ENCODE measurements at regions of chr2 and their contacts with region 1.

Region 1: GRCh38 chr2:62787386-62787785 is 81.9 kb downstream of the EHBP1 start:
- DNase-seq: peak; percentile 20
- H3K4me3 ChIP-seq: no peak overlapping the region
- H3K27ac ChIP-seq: no peak overlapping the region
- H3K4me1 ChIP-seq: peaks cover 8% of the 10 kb centered on the region
- H3K27me3 ChIP-seq: no peaks in the 10 kb centered on the region
- CTCF ChIP-seq: peak; percentile 21 to 51

Region 2: GRCh38 chr2:62939735-62940491 is 152.5 kb after region 1 on chr2:
- CTCF ChIA-PET with region 1: no interaction called
- dilution Hi-C with region 1: no loop called
- in situ Hi-C with region 1: no loop called
- intact Hi-C with region 1: loop called (anchors 10 kb)
- DNase-seq: peak; percentile 92
- H3K4me3 ChIP-seq: no peak overlapping the region
- H3K27ac ChIP-seq: no peak overlapping the region
- H3K4me1 ChIP-seq: peaks cover 9% of the 10 kb centered on the region
- H3K27me3 ChIP-seq: no peaks in the 10 kb centered on the region
- CTCF ChIP-seq: no peak

Region 3: DNA sequence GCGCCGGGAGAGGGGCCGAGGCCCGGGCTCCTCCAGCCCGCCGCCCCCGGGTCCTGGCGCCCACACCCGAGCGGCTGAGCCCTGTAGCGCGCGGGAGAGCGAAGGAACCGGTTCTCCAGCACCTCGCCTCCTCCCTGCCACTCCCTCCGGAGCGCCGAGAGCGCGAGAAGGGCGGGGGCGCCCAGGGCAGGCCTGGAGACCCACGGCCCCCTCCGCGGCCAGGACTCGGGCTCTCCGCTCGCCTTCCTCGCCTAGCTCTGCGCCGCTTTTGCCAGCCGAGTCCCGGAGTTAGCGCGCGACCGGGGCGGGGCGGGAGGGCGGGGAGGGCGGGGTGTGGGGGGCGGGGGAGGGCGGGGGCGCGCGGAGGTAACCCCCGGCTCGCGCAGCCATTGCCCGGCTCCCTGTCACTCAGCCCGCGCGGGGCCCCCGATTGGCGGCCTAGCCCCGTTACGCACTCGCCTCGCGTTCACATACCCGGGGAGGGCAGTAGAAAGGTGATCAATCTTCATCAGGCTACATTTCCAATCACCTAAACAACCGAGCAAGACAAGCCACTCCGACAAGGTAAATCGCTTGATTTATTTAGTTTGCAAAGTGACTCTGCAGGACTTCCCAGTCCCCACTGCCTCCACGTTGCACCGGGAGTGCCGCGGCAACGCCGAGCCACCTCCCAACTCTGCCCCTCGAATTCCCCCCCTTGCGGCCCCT is 263.1 kb after region 1 on chr2 and contains the start of gene OTX1:
- CTCF ChIA-PET with region 1: interaction called, 3 read pairs
- dilution Hi-C with region 1: no loop called
- in situ Hi-C with region 1: no loop called
- intact Hi-C with region 1: loop called (anchors 10 kb)
- DNase-seq: peak; percentile 86
- H3K4me3 ChIP-seq: peak within 1 kb of the TSS; percentile 84 to 100 (median 99)
- H3K27ac ChIP-seq: peak within 1 kb of the TSS; percentile 78
- H3K4me1 ChIP-seq: peaks cover 8% of the 10 kb centered on the region
- H3K27me3 ChIP-seq: no peaks in the 10 kb centered on the region
- CTCF ChIP-seq: no peak
- total RNA-seq, gene OTX1: 1.0 to 2.9 TPM

Region 4: DNA sequence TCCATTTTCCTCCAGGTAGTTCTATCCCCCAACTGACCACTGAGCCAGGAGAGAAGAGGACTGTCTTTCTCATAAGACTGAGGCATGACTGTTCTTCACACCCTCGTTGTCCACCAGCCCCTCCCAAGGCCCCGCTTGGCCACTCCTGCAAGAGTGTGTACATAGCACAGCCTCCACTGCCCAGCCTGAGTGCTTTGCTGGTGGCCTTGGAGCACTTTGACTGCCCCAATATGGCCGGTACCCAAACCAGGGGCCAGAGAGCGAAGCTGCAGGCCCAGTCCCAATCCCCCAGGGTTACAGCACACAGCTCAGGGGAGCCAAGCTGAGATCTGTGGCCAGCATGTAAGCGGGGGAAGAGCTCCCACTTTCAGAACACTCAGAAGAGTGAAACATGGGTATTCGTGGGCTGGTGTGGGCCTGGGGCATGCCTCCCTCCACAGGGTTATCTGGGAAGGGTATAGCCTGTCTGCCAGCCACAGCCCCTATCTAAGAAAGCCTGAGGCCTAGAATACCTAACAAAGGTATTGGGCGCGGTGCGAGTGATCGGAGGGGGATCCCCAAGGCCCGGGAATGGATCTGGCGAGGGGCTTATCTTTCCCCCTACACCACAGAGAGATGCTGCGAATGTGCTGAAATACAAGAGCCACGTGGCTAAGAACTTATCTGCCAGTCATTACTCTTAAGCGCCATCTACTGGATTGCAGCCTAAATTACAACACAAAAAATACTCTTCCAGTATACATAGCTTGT is 637.1 kb after region 1 on chr2:
- CTCF ChIA-PET with region 1: no interaction called
- dilution Hi-C with region 1: no loop called
- in situ Hi-C with region 1: no loop called
- intact Hi-C with region 1: loop called (anchors 2 kb)
- DNase-seq: peak; percentile 38
- H3K4me3 ChIP-seq: no peak overlapping the region
- H3K27ac ChIP-seq: no peak overlapping the region
- H3K4me1 ChIP-seq: no peaks in the 10 kb centered on the region
- H3K27me3 ChIP-seq: no peaks in the 10 kb centered on the region
- CTCF ChIP-seq: peak; percentile 67 to 73

Region 5: GRCh38 chr2:63544017-63544627 is 756.7 kb after region 1 on chr2:
- CTCF ChIA-PET with region 1: no interaction called
- dilution Hi-C with region 1: no loop called
- in situ Hi-C with region 1: no loop called
- intact Hi-C with region 1: loop called (anchors 10 kb)
- DNase-seq: no peak
- H3K4me3 ChIP-seq: no peak overlapping the region
- H3K27ac ChIP-seq: no peak overlapping the region
- H3K4me1 ChIP-seq: peaks cover 5% of the 10 kb centered on the region
- H3K27me3 ChIP-seq: no peaks in the 10 kb centered on the region
- CTCF ChIP-seq: peak; percentile 45 to 59

Measured in mammary epithelial cell (primary cell).